IMR-90 (cell line): ENCODE measurements at regions of chr11 and their contacts with region 1.

Region 1: DNA sequence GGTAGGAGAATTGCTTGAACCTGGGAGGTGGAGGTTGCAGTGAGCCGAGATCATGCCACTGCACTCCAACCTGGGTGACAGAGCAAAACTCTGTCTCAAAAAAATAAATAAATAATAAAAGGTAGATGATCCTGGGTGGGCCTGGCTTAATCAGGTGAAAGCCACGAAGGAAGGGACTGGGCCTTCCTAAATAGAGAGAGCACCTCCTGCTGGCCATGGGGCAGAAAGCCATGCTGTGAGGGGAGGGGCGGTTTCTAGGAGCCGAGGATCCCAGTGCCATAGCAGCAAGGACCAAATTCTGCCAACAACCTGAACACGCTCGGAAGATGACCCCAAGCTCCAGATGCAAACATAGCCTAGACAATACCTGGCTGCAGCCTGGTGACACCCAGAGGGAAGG is 24.5 kb upstream of the DGKZ start:
- DNase-seq: peak; percentile 35
- ATAC-seq: no peak
- H3K4me3 ChIP-seq: no peak overlapping the region
- H3K27ac ChIP-seq: no peak overlapping the region
- H3K4me1 ChIP-seq: no peaks in the 10 kb centered on the region
- H3K27me3 ChIP-seq: no peaks in the 10 kb centered on the region
- CTCF ChIP-seq: peak; percentile 50
- POLR2A ChIP-seq: no peak
- RAD21 ChIP-seq: peak; percentile 37; the same call in 1 of the 2 replicates

Region 2: GRCh38 chr11:45974806-45975205 is 348.0 kb before region 1 on chr11:
- CTCF ChIA-PET with region 1: no interaction called
- POLR2A ChIA-PET with region 1: no interaction called
- dilution Hi-C with region 1: no loop called
- in situ Hi-C with region 1: loop called (anchors 10 kb)
- intact Hi-C with region 1: no loop called
- DNase-seq: peak; percentile 15
- ATAC-seq: no peak
- H3K4me3 ChIP-seq: no peak overlapping the region
- H3K27ac ChIP-seq: no peak overlapping the region
- H3K4me1 ChIP-seq: no peaks in the 10 kb centered on the region
- H3K27me3 ChIP-seq: no peaks in the 10 kb centered on the region
- CTCF ChIP-seq: no peak
- POLR2A ChIP-seq: no peak
- RAD21 ChIP-seq: no peak

Region 3: GRCh38 chr11:46435679-46436078 is 112.9 kb after region 1 on chr11:
- CTCF ChIA-PET with region 1: no interaction called
- POLR2A ChIA-PET with region 1: no interaction called
- dilution Hi-C with region 1: no loop called
- in situ Hi-C with region 1: no loop called
- intact Hi-C with region 1: no loop called
- DNase-seq: no peak
- ATAC-seq: no peak
- H3K4me3 ChIP-seq: no peak overlapping the region
- H3K27ac ChIP-seq: no peak overlapping the region
- H3K4me1 ChIP-seq: no peaks in the 10 kb centered on the region
- H3K27me3 ChIP-seq: no peaks in the 10 kb centered on the region
- CTCF ChIP-seq: no peak
- POLR2A ChIP-seq: no peak
- RAD21 ChIP-seq: no peak